Aorta (tissue), 5 donors: ENCODE measurements at regions of chr7 and their contacts with region 1.

Region 1: DNA sequence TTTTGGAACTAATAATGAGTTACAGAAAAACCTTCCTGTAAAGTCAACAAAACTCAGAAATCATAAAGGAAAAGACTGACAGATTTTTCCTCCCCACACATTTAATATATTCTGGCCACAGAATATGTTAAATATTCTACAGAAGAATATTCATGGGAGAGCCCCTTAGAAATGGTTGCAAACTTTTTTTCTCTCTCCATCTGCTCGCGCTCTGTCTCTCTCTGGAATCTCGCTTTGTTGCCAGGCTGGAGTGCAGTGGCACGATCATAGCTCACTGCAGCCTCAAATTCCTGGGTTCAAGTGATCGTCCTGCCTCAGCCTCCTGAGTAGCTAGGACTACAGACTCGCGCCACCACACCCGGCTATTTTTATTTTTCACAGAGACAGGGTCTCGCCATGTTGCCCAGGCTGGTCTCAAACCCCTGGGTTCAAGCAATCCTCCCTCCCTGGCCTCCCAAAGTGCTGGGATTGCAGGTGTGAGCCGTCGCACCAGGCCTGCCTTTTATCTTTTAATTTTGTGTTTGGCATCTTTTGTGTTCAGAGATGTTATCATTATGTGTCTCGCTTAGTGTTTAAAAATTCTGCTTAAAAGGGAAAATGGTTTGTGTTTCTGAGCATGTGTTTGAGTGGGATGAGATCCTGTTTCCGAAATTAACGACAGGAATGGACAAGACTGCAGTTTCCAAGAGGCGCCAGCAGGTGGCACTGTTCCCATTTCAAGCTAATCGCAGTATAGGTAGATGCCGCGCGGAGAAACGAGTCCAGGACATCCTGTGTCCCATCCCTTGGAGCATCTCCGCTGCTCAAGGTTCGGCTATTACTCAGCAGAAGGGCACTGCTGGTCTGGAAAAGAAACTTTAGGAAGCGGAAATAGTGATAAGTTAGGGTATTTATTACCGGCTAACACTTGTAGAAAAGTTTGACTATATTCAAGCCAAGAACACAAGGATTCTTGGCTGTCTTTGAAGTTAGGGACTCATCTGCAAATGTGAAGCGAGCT is 23.1 kb upstream of the ST7 start:
- DNase-seq: peak; percentile 85 to 94
- ATAC-seq: peak; percentile 89
- H3K4me3 ChIP-seq: no peak overlapping the region
- H3K27ac ChIP-seq: no peak overlapping the region
- H3K4me1 ChIP-seq: no peaks in the 10 kb centered on the region
- H3K27me3 ChIP-seq: no peaks in the 10 kb centered on the region

Region 2: GRCh38 chr7:116776610-116777289 is 153.5 kb before region 1 on chr7:
- intact Hi-C with region 1: no loop called
- DNase-seq: no peak
- ATAC-seq: peak; percentile 20
- H3K4me3 ChIP-seq: no peak overlapping the region
- H3K27ac ChIP-seq: no peak overlapping the region
- H3K4me1 ChIP-seq: peaks cover 5 to 12% of the 10 kb centered on the region in 2 donors
- H3K27me3 ChIP-seq: no peaks in the 10 kb centered on the region

Region 3: DNA sequence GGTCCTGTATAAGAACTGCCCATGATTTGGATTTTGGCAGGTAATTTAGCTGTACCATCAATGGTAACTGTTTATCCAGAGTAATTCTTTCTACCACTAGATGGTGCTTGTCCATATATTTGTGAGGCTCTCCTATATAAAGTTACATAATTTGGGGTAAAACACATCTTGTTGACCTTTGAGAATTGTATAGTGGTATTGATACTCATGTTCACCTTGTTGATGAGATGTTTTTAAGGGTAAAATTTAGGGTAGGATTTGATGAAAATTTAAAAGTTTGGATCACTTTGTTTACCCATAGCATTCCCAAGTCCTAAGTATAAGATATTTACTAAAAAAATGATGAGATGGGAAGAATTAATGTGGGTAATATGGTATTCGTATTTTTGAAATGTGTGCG is 54.7 kb after region 1 on chr7:
- intact Hi-C with region 1: loop called in 1 of 2 experiments (anchors 10 kb)
- DNase-seq: no peak
- ATAC-seq: no peak
- H3K4me3 ChIP-seq: no peak overlapping the region
- H3K27ac ChIP-seq: no peak overlapping the region
- H3K4me1 ChIP-seq: no peaks in the 10 kb centered on the region
- H3K27me3 ChIP-seq: no peaks in the 10 kb centered on the region

Region 4: GRCh38 chr7:117119192-117119924 is 189.1 kb after region 1 on chr7:
- intact Hi-C with region 1: loop called in 1 of 2 experiments (anchors 2 kb)
- DNase-seq: peak; percentile 90 to 92
- ATAC-seq: peak; percentile 58
- H3K4me3 ChIP-seq: no peak overlapping the region
- H3K27ac ChIP-seq: no peak overlapping the region
- H3K4me1 ChIP-seq: no peaks in the 10 kb centered on the region
- H3K27me3 ChIP-seq: no peaks in the 10 kb centered on the region

Region 5: GRCh38 chr7:117127585-117128168 is 197.5 kb after region 1 on chr7:
- intact Hi-C with region 1: loop called in 1 of 2 experiments (anchors 2 kb)
- DNase-seq: peak in 1 of 2 donors; percentile 50
- ATAC-seq: peak; percentile 69
- H3K4me3 ChIP-seq: no peak overlapping the region
- H3K27ac ChIP-seq: no peak overlapping the region
- H3K4me1 ChIP-seq: peaks cover 2 to 3% of the 10 kb centered on the region in 2 donors
- H3K27me3 ChIP-seq: no peaks in the 10 kb centered on the region

Region 6: GRCh38 chr7:117385340-117386109 is 455.3 kb after region 1 on chr7:
- intact Hi-C with region 1: loop called (anchors 10 kb)
- DNase-seq: no peak
- ATAC-seq: no peak
- H3K4me3 ChIP-seq: no peak overlapping the region
- H3K27ac ChIP-seq: no peak overlapping the region
- H3K4me1 ChIP-seq: no peaks in the 10 kb centered on the region
- H3K27me3 ChIP-seq: no peaks in the 10 kb centered on the region